Activated CD4-positive, alpha-beta T cell treated with anti-CD3 and anti-CD28 coated beads, Interleukin-2, amount 10 ng/mL, durations not matched to agents 24 days and 14 days (primary cell): ENCODE measurements at regions of chr14 and their contacts with region 1.

Region 1: DNA sequence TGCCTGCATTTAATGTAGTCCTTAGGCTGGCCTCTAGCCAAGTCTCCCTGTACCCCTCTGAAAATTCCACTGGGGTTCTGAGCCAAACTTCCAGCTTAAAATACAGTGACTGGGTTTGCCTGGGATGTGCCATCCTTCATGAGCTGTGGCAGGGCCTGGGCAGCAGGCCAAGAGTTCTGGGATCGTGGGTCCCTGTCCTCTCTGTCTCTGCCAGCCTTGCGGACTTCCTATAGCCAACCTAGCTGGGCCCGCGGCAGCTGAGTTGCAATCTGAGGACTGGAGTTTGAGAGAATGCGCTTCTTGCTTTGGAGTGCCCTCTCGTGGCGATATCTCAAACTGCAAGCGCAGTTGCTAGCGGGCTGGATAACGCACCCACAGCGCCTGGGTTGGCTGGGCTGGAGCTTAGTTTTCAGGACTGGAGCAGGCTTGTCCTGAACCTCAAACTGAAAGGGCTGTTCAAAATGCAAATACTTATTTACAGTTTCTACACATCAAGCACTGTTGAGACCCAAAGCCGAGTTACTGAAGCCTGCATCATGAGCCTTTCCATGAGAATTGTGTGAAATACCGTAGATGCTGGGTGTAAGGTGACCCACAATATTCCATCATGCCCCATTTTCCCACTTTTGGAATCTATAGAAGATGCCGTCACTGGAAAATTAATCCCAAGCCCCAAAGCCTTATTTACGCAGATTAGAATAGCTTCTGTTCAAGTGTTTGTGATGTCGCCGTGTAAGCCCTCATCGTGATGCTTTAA is 7.3 kb upstream of the IFI27L2 start:
- DNase-seq: peak; percentile 96
- H3K4me3 Mint-ChIP-seq: no peak overlapping the region
- H3K27ac Mint-ChIP-seq: no peak overlapping the region
- H3K4me1 Mint-ChIP-seq: peaks cover 7% of the 10 kb centered on the region
- H3K27me3 Mint-ChIP-seq: peaks cover 38% of the 10 kb centered on the region

Region 2: GRCh38 chr14:93994919-93995682 is 141.7 kb before region 1 on chr14:
- intact Hi-C with region 1: no loop called
- DNase-seq: no peak
- H3K4me3 Mint-ChIP-seq: no peak overlapping the region
- H3K27ac Mint-ChIP-seq: peak overlapping the region; percentile 71
- H3K4me1 Mint-ChIP-seq: peaks cover 46% of the 10 kb centered on the region
- H3K27me3 Mint-ChIP-seq: no peaks in the 10 kb centered on the region

Region 3: GRCh38 chr14:94029671-94030203 is 107.0 kb before region 1 on chr14:
- intact Hi-C with region 1: no loop called
- DNase-seq: no peak
- H3K4me3 Mint-ChIP-seq: no peak overlapping the region
- H3K27ac Mint-ChIP-seq: no peak overlapping the region
- H3K4me1 Mint-ChIP-seq: peaks cover 16% of the 10 kb centered on the region
- H3K27me3 Mint-ChIP-seq: no peaks in the 10 kb centered on the region

Region 4: GRCh38 chr14:94051115-94051514 is 85.6 kb before region 1 on chr14:
- intact Hi-C with region 1: no loop called
- DNase-seq: no peak
- H3K4me3 Mint-ChIP-seq: no peak overlapping the region
- H3K27ac Mint-ChIP-seq: no peak overlapping the region
- H3K4me1 Mint-ChIP-seq: peaks cover 30% of the 10 kb centered on the region
- H3K27me3 Mint-ChIP-seq: no peaks in the 10 kb centered on the region

Region 5: GRCh38 chr14:94088516-94088915 is 48.2 kb before region 1 on chr14:
- intact Hi-C with region 1: no loop called
- DNase-seq: no peak
- H3K4me3 Mint-ChIP-seq: no peak overlapping the region
- H3K27ac Mint-ChIP-seq: no peak overlapping the region
- H3K4me1 Mint-ChIP-seq: peaks cover 2% of the 10 kb centered on the region
- H3K27me3 Mint-ChIP-seq: no peaks in the 10 kb centered on the region

Region 6: GRCh38 chr14:94180655-94181271 is 44.0 kb after region 1 on chr14:
- intact Hi-C with region 1: loop called (anchors 1 kb)
- DNase-seq: peak; percentile 76
- H3K4me3 Mint-ChIP-seq: peak overlapping the region; percentile 58
- H3K27ac Mint-ChIP-seq: peak overlapping the region; percentile 22
- H3K4me1 Mint-ChIP-seq: peaks cover 11% of the 10 kb centered on the region
- H3K27me3 Mint-ChIP-seq: peaks cover 25% of the 10 kb centered on the region